HEK293T (cell line): ENCODE measurements at regions of chr14 and their contacts with region 1.

Region 1: DNA sequence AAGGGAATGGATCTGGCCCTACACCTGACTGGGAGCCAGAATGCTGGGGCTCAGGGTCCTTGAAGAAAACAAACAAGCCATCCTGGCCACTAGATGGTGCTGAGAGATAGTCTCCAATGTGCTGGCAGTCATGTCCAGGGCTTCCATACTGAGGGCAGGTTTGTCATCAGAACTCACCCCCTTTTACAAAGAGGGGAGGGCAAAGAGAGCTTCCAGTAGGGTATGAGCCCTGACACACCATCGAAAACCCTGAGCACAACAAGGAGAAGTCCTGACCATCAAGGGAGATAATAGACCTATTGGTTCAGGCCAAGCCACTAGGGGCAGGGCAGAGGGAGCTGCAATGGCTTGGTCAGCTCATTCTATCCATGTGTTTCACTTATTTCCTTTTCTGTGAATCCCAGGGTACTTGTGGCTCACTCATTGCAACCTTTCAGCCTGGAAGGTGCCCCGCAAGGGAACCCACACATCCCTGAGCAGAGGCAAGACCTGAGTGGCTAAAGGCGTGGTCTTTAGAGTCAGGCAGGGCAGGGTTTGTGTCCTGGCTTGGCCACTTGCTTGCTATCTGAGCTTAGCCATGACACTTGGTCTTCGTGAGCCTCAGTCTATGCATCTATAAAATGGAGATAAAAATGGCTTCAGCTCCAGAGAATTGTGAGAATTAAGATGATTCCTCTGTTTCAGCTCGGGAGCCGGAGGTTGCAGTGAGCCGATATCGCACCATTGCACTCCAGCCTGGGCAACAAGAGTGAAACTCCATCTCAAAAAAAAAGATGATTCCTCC is 6.2 kb upstream of the PLEKHH1 start:
- DNase-seq: peak; percentile 63

Region 2: DNA sequence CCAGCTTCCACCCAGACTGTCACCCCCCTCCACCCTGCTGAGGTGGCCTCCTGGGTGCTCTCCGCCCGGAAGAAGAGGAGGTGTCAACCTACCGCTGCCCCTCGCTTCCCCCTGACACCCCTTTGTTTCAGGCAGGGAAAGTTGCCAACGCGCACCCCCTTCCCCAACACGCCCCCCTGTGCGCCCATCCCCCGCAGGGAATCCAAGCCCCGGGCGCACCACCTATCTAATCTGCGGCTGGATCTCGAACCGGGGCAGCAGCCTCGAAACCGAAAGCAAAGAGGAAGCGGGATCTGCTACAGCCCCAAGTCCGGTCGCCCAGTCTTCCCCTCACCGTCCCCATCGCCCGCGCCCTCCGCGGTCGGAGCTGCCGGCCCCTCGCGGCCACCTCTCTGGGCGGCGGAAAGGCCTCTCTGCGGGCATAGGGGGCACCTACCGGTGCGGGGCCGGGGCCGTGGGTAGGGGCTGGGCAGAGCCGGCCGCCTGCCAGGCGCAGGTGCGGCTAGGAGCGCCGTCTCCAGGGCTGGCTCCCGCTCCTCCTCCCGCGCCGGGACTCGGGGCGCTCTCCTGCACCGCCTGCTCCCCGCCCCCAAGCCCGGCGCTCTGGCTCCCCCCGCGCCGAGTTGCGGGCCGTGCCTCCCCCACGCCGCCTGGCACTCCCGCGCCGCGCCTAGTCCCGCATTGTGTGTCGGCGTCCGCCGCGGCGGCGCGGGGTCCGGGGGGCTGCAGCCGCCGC is 12.1 kb before region 1 on chr14:
- CTCF ChIA-PET with region 1: interaction called, 15 read pairs
- POLR2A ChIA-PET with region 1: interaction called, 3 read pairs
- DNase-seq: peak; percentile 42

Region 3: DNA sequence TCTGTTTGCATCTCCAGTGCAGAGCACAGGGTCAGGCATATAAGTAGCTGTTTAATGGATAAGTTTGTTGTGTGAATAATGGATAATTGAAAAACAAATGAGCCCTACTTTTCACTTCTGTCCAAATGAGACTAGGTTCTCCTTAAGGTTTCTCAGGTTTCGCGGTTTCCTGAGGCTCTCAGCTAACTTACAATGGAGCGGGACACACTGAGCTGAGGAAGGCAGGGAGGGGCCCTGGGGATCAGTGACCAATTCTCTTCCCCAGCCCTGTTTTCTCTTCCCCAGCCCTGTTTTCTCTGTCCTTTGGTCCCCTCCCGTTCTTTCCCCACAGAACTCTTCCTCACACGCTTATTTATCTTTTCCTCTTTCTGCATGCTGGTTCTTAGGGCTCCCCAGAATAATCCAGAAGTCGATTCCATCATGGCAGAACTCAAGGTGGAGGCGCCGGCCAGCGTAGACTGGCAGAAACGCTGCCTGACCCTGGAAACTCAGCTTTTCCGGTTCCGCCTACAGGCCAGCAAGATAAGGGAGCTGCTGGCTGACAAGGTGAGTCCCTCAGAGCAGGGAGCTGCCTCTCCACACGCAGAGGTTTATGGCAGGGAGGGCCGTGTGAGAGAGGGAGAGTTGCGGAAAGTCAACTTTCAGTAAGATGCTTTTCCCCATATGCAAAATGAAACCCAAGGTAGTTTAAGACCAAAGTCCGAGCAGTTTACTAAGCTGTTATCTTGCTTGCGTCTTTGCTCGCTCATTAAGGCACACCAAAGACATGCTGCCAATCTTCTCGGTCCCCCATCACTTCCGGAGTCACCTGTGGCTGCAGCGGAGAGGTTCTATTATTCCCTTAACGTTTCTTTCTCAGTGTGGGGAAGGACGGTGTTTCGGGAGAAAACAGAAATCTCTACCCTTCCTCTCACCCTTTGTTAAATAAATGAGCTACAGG is 14.8 kb after region 1 on chr14:
- CTCF ChIA-PET with region 1: interaction called, 18 read pairs
- POLR2A ChIA-PET with region 1: no interaction called
- DNase-seq: no peak

Region 4: DNA sequence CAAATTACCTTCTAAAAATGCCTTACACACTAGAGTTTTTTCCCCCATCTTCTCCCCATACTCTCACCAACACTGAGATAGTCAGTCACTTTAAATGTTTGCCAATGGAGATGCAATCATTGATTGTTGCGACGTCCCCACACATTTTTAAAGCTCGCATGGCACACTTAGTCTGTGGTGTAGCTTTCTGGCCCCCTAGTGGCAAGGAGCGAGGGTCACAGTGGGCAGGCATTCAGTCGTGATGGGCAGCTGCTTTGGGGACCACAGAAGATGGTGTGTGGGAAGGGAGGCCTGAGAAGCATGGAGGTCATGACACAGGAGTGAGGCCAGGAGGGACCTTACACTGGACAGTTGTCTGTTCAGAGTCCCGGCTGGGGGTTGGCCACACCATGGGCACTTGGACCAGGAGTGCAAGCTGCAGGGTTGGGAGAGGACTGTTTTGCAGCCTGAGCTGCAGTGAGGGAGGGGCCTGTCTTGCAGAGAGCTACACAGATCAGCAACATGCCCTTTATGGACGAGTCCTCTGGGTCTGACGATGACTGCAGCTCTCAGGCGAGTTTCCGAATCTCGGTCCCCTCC is 44.5 kb after region 1 on chr14:
- CTCF ChIA-PET with region 1: interaction called, 39 read pairs
- POLR2A ChIA-PET with region 1: interaction called, 12 read pairs
- DNase-seq: peak; percentile 72